WTC11 (cell line): ENCODE measurements at regions of chr3 and their contacts with region 1.

Region 1: GRCh38 chr3:16658004-16658920 is 53.0 kb upstream of the DAZL start:
- DNase-seq: peak; percentile 20
- ATAC-seq: peak; percentile 81
- H3K4me3 Mint-ChIP-seq: no peak overlapping the region
- H3K27ac Mint-ChIP-seq: peak overlapping the region; percentile 82
- H3K4me1 Mint-ChIP-seq: peaks cover 80% of the 10 kb centered on the region
- H3K27me3 Mint-ChIP-seq: no peaks in the 10 kb centered on the region
- CTCF ChIP-seq: no peak

Region 2: GRCh38 chr3:16264708-16265454 is 393.4 kb before region 1 on chr3 and contains the starts of genes DPH3 and OXNAD1:
- CTCF ChIA-PET with region 1: no interaction called
- POLR2A ChIA-PET with region 1: no interaction called
- DNase-seq: peak; percentile 99
- ATAC-seq: peak; percentile 98
- H3K4me3 Mint-ChIP-seq: peak within 1 kb of the TSS; percentile 99
- H3K27ac Mint-ChIP-seq: peak within 1 kb of the TSS; percentile 98
- H3K4me1 Mint-ChIP-seq: peaks cover 19% of the 10 kb centered on the region
- H3K27me3 Mint-ChIP-seq: no peaks in the 10 kb centered on the region; the same call in 1 of the 2 replicates
- CTCF ChIP-seq: no peak
- total RNA-seq, gene DPH3: 26.5 to 27.8 TPM (median 26.6 TPM) in 3 replicates
- total RNA-seq, gene OXNAD1: 20.1 to 21.7 TPM (median 21.4 TPM) in 3 replicates

Region 3: DNA sequence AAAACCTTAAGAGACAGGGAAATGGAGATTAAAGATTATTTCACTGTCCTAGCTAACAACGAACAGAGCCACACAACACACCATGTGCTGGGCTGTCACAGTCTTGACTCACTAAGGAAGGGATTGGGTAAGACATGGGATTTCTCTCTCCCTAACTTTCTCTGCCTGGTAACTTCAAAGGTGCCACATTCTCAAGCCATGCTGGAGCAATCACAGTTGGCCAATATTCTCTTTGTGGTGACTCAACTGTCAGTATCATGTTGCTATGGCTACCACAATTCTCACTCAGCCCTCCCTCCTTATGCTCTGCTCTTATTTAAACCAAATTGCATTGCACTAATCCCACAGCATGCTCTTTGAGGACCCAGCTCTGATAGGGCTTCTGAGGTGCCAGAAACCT is 319.3 kb before region 1 on chr3:
- CTCF ChIA-PET with region 1: no interaction called
- POLR2A ChIA-PET with region 1: no interaction called
- DNase-seq: no peak
- ATAC-seq: no peak
- H3K4me3 Mint-ChIP-seq: no peak overlapping the region
- H3K27ac Mint-ChIP-seq: no peak overlapping the region
- H3K4me1 Mint-ChIP-seq: no peaks in the 10 kb centered on the region
- H3K27me3 Mint-ChIP-seq: no peaks in the 10 kb centered on the region; the same call in 1 of the 2 replicates
- CTCF ChIP-seq: no peak

Region 4: GRCh38 chr3:16671690-16672089 is 13.4 kb after region 1 on chr3:
- CTCF ChIA-PET with region 1: interaction called, 10 read pairs
- POLR2A ChIA-PET with region 1: no interaction called
- DNase-seq: no peak
- ATAC-seq: peak; percentile 57
- H3K4me3 Mint-ChIP-seq: peak overlapping the region; percentile 37
- H3K27ac Mint-ChIP-seq: peak overlapping the region; percentile 99
- H3K4me1 Mint-ChIP-seq: peaks cover 52% of the 10 kb centered on the region
- H3K27me3 Mint-ChIP-seq: peaks cover 11% of the 10 kb centered on the region
- CTCF ChIP-seq: no peak

Region 5: GRCh38 chr3:16871915-16872842 is 213.9 kb after region 1 on chr3:
- CTCF ChIA-PET with region 1: interaction called, 11 read pairs
- POLR2A ChIA-PET with region 1: no interaction called
- DNase-seq: no peak
- ATAC-seq: peak; percentile 72
- H3K4me3 Mint-ChIP-seq: no peak overlapping the region
- H3K27ac Mint-ChIP-seq: no peak overlapping the region
- H3K4me1 Mint-ChIP-seq: no peaks in the 10 kb centered on the region
- H3K27me3 Mint-ChIP-seq: no peaks in the 10 kb centered on the region; the same call in 1 of the 2 replicates
- CTCF ChIP-seq: no peak